A673 (cell line): ENCODE measurements at regions of chr11 and their contacts with region 1.

Region 1: DNA sequence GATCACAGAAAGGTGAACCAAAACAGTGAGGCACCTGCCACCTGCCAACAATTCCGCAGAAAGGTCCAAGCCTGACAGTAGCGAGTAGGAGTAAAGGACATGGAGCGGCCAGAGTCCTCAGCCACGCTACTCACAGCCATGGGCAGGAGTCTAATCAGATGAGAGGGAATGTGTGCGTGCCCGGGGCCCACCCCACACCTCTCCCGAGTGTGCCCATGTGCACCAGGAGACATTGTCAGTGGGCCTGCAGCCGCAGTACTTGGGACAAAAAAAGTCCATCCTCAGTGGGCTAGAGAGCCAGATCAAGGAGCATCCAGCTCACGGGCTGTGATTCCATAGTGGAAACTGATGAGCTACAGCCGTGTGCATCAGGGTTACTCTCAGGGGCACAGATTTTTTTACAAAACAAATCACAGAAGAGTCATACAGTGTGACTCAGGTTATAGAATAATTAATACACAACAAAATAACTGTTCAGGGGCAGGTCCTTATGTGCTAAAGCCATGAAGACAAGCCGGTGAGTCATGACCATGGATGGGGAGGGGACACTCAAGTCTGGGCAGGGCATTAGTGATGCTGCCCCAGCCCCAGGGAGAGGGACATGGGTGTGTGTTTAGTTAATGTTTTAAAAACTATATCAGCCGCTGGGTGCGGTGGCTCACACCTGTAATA is 12.0 kb downstream of the SART1 start:
- DNase-seq: no peak
- H3K4me3 ChIP-seq: no peak overlapping the region
- H3K27ac ChIP-seq: no peak overlapping the region
- H3K4me1 ChIP-seq: no peaks in the 10 kb centered on the region
- H3K27me3 ChIP-seq: no peaks in the 10 kb centered on the region
- CTCF ChIP-seq: no peak

Region 2: DNA sequence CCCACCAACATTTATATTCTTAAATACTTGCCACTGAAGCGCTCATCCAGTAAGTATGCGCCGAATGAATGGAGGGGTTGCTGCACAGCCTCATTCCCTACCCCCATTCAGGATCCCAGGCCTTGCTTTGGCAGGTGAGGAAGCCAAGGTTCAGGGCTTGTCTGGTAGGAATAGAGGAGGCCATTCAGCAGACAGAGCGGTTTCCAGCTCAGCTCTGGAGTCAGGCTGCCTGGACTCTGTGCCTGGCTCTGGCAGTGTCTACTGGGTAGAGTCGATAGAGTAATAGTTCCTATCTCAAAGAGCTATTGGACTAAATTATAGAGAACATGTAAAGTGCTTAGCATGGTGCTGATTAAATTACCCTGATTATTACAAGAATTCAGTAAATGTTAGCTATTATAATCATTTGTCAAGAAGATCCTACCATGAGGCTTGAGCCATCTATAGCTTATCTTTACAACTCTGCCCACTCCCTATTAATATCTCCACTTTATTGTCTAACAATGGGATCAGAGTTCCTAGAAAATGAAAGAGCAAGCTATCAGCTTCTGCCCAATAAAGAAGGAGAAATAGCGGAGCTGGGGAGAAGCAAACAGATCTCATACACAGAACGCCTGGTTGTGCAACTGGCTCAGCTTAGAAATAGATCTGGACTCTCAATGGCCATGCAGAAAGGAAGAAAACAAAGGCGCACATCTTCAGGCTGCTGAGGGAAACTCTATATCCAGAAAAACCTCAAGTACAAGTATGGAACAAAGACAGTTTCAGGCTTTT is 146.4 kb before region 1 on chr11:
- CTCF ChIA-PET with region 1: interaction called, 13 read pairs
- POLR2A ChIA-PET with region 1: no interaction called
- intact Hi-C with region 1: no loop called
- DNase-seq: no peak
- H3K4me3 ChIP-seq: no peak overlapping the region
- H3K27ac ChIP-seq: no peak overlapping the region
- H3K4me1 ChIP-seq: no peaks in the 10 kb centered on the region
- H3K27me3 ChIP-seq: no peaks in the 10 kb centered on the region
- CTCF ChIP-seq: no peak